K562 (cell line): ENCODE measurements at regions of chr15 and their contacts with region 1.

Region 1: GRCh38 chr15:74545880-74546656 is 5.0 kb downstream of the ARID3B start:
- DNase-seq: peak; percentile 94 to 100 (median 94)
- ATAC-seq: peak; percentile 92
- H3K4me3 ChIP-seq: no peak overlapping the region
- H3K27ac ChIP-seq: no peak overlapping the region
- H3K4me1 ChIP-seq: peaks cover 16 to 28% of the 10 kb centered on the region in 2 experiments
- H3K27me3 ChIP-seq: no peaks in the 10 kb centered on the region
- CTCF ChIP-seq: 0 out of 6 replicates have a peak, but pooled peaks of 1 of the 3 experiments have one; percentile 4
- EP300 ChIP-seq: no peak; the same call in none of the 2 replicates
- POLR2A ChIP-seq: no peak
- RAD21 ChIP-seq: peak in 1 of 2 experiments; percentile 45; a peak in 2 of 4 replicates

Region 2: DNA sequence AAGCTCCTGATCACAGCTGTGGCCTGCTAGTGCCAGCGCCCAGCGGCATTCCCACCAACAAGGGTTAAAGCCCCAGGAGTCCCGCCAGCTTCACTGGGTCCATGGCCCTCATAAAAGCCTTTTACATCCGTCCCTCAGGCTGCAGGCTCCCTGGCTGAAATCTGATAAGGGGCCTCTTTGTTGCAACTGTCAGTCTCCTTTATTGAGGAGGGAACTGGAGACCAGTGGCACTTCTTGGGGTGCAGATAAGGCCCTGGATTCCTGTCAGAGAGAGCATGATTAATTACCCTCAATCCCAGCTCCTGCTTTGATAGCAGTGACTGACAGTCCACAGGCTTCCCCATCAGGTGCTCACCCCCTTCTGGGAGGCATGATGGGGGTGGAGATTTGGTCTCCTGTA is 38.7 kb after region 1 on chr15:
- CTCF ChIA-PET with region 1: no interaction called
- POLR2A ChIA-PET with region 1: interaction called, 4 read pairs
- in situ Hi-C with region 1: no loop called
- intact Hi-C with region 1: loop called (anchors 2 kb)
- DNase-seq: peak; percentile 64 to 78 (median 73)
- ATAC-seq: peak; percentile 76
- H3K4me3 ChIP-seq: no peak overlapping the region
- H3K27ac ChIP-seq: no peak overlapping the region
- H3K4me1 ChIP-seq: peaks cover 20 to 27% of the 10 kb centered on the region in 2 experiments; a peak in 4 of 5 replicates
- H3K27me3 ChIP-seq: no peaks in the 10 kb centered on the region
- CTCF ChIP-seq: no peak
- EP300 ChIP-seq: peak; percentile 82
- POLR2A ChIP-seq: no peak
- RAD21 ChIP-seq: no peak

Region 3: GRCh38 chr15:74598126-74598842 is 52.2 kb after region 1 on chr15:
- CTCF ChIA-PET with region 1: no interaction called
- POLR2A ChIA-PET with region 1: interaction called, 5 read pairs
- in situ Hi-C with region 1: no loop called
- intact Hi-C with region 1: loop called (anchors 5 kb)
- DNase-seq: peak; percentile 95 to 100 (median 100)
- ATAC-seq: peak; percentile 99
- H3K4me3 ChIP-seq: peak overlapping the region; percentile 46
- H3K27ac ChIP-seq: peak overlapping the region; percentile 74
- H3K4me1 ChIP-seq: peaks cover 11 to 37% of the 10 kb centered on the region in 2 experiments; a peak in 4 of 5 replicates
- H3K27me3 ChIP-seq: no peaks in the 10 kb centered on the region
- CTCF ChIP-seq: no peak
- EP300 ChIP-seq: no peak
- POLR2A ChIP-seq: peak; percentile 94
- RAD21 ChIP-seq: no peak

Region 4: DNA sequence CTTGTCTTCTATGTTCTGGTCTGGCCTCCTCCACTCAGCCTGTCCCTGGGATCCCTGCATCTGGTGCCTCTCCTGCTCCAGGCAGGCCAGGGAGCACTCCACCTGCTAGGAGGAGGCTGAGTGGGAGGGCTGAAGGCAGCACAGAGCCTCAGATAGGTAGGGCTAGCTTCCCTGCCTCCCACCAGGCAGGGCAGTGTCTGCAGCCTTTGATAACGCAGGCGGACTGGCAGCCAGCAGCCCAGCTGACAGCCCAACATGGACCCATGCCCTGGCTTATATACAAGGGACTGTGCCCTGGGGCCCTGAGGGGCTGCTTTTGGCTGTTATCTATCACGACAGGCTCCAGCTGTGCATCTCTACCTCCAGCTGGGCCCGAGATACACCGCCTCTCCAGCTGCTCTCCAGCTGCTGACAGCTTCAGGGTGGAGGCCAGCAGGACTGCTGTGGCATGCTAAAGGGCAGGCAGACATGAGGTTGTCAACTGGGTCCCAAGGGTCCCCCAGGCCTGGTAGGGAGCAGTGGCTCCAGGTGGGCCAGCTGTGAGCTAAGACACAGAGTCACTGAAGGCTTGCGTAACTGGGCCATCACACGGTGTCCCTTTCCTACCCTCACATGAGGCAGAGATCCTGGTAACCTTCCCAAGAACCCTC is 64.4 kb after region 1 on chr15:
- CTCF ChIA-PET with region 1: no interaction called
- POLR2A ChIA-PET with region 1: interaction called, 8 read pairs
- in situ Hi-C with region 1: loop called (anchors 5 kb)
- intact Hi-C with region 1: loop called (anchors 1 kb)
- DNase-seq: peak; percentile 91 to 94 (median 92)
- ATAC-seq: peak; percentile 64
- H3K4me3 ChIP-seq: no peak overlapping the region
- H3K27ac ChIP-seq: no peak overlapping the region; the same call in 2 of the 3 replicates
- H3K4me1 ChIP-seq: peaks cover 17 to 51% of the 10 kb centered on the region in 2 experiments
- H3K27me3 ChIP-seq: peaks cover 0 to 11% of the 10 kb centered on the region in 2 experiments; a peak in 2 of 5 replicates
- CTCF ChIP-seq: no peak
- EP300 ChIP-seq: peak; percentile 77
- POLR2A ChIP-seq: no peak
- RAD21 ChIP-seq: no peak